Aorta (tissue), 5 donors: ENCODE measurements at regions of chr5 and their contacts with region 1.

Region 1: GRCh38 chr5:52961274-52961681 is 27.9 kb upstream of the ITGA2 start:
- DNase-seq: no peak
- ATAC-seq: no peak
- H3K4me3 ChIP-seq: no peak overlapping the region
- H3K27ac ChIP-seq: no peak overlapping the region
- H3K4me1 ChIP-seq: peaks cover 0 to 2% of the 10 kb centered on the region in 2 donors
- H3K27me3 ChIP-seq: no peaks in the 10 kb centered on the region

Region 2: DNA sequence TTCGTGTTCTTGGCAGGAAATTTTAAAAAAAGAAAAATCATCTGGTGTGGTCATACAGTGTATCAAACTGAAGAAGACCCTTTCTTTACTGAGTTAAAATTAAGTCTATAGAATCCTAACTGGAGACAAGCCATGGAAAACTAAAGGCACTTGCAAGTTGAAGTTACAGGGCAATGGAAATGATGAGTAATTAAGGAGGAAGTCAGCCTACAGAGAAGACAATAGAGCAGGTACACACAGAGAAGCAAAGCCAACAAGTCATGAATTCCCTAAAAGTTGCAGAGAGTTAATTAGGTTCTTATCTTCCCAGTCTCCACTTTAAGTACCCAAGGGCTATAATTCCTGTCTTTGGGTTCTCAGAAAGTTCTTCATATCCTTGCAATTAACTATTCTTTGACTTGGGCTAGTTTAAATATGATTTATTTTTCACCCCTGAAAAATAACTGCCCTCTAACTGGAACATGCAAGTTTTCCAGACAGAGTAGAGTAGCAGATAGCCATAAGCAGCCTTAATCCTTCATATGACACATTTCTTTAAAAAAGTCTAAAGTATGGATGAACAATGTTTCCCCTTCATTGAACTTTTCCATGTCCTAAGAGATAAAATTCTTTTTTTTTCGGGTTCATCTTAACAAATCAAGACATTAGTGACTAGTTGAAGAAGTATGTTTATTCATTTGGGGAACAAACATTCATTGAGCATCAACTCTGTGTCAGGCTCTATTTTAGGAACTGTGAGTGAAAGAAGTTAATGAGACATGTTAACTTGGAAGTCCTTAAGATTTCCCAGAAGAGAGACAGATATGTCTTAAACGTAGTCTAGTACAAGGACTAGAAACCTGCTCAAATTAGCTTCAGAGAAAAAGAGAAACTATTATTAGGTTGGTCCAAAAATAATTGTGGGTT is 22.7 kb after region 1 on chr5:
- intact Hi-C with region 1: loop called in 1 of 2 experiments (anchors 1 kb)
- DNase-seq: no peak
- ATAC-seq: no peak
- H3K4me3 ChIP-seq: no peak overlapping the region
- H3K27ac ChIP-seq: no peak overlapping the region
- H3K4me1 ChIP-seq: no peaks in the 10 kb centered on the region
- H3K27me3 ChIP-seq: no peaks in the 10 kb centered on the region